ENCODE measurements at regions of chr14 and their contacts with region 1.

Region 1: GRCh38 chr14:81164167-81164774 is 56.5 kb downstream of the GTF2A1 start:
- DNase-seq: peak; percentile 88
- H3K4me3 Mint-ChIP-seq: no peak overlapping the region
- H3K27ac Mint-ChIP-seq: peak overlapping the region; percentile 30
- H3K4me1 Mint-ChIP-seq: peaks cover 23% of the 10 kb centered on the region
- H3K27me3 Mint-ChIP-seq: no peaks in the 10 kb centered on the region

Region 2: DNA sequence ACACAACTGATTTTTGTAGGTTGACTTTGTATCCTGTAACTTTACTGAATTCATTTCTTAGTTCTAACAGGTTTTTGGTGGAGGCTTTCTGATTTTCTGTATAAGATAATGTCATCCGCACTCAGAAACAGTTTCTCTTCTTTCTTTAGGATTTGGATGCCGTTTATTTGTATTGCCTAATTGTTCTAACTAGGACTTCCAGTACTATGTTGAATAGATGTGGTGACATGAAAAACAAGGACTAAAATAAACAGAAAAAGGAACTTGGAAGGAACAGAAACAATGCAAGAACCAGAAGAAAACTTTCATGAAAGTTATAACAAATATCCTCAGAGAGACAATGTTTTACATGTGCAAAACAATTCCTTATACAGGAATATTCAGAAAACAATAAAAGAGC is 43.8 kb before region 1 on chr14:
- intact Hi-C with region 1: no loop called
- DNase-seq: no peak
- H3K4me3 Mint-ChIP-seq: no peak overlapping the region
- H3K27ac Mint-ChIP-seq: no peak overlapping the region
- H3K4me1 Mint-ChIP-seq: peaks cover 5% of the 10 kb centered on the region
- H3K27me3 Mint-ChIP-seq: no peaks in the 10 kb centered on the region

Region 3: DNA sequence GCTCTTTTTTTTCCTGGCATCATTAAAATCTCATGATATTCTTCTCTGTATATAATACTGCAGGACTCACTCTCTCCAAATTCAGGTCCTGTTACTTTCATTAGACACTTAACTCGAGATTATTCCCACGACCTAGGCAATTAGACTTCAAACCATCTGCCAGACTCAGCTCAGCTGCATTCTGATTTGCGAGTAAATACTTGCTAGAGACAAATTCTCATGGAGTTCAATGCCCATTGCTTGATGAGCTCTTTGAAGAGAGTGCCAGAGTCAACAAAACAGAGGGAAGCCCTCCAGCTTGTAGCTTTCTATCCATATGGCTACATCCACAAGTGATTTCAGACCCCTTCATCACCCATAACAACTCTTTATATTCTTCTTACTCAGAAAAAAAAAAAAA is 31.8 kb before region 1 on chr14:
- intact Hi-C with region 1: no loop called
- DNase-seq: no peak
- H3K4me3 Mint-ChIP-seq: no peak overlapping the region
- H3K27ac Mint-ChIP-seq: no peak overlapping the region
- H3K4me1 Mint-ChIP-seq: no peaks in the 10 kb centered on the region
- H3K27me3 Mint-ChIP-seq: peaks cover 3% of the 10 kb centered on the region

Region 4: DNA sequence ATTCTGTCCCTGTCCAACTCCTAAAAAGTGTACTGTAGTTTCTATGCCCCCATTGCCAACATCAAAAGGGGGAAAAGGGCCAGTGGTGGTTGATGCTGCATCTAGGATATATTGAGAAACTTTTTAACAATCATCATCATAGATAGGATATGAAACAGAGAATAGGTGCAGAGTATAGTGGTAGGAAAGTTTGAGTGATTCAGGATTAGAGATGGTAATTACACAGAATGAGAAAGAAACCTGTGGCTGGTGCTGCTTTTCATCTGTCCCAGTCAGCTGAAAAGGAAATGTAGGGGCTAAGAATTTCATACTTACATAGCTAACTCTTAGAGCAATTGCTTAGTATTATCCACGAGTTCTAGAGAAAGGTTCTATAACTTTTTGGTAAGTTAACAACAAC is 11.1 kb before region 1 on chr14:
- intact Hi-C with region 1: loop called (anchors 1 kb)
- DNase-seq: no peak
- H3K4me3 Mint-ChIP-seq: no peak overlapping the region
- H3K27ac Mint-ChIP-seq: peak overlapping the region; percentile 54
- H3K4me1 Mint-ChIP-seq: peaks cover 5% of the 10 kb centered on the region
- H3K27me3 Mint-ChIP-seq: peaks cover 4% of the 10 kb centered on the region